Right ventricle myocardium inferior (tissue), 1 donor: ENCODE measurements at regions of chr2 and their contacts with region 1.

Region 1: GRCh38 chr2:231642631-231643494 is 50.2 kb downstream of the TEX44 start:
- DNase-seq: peak; percentile 84
- ATAC-seq: peak; percentile 93

Region 2: GRCh38 chr2:231662028-231662810 is 19.4 kb after region 1 on chr2:
- intact Hi-C with region 1: loop called (anchors 1 kb)
- DNase-seq: peak; percentile 97
- ATAC-seq: peak; percentile 80

Region 3: DNA sequence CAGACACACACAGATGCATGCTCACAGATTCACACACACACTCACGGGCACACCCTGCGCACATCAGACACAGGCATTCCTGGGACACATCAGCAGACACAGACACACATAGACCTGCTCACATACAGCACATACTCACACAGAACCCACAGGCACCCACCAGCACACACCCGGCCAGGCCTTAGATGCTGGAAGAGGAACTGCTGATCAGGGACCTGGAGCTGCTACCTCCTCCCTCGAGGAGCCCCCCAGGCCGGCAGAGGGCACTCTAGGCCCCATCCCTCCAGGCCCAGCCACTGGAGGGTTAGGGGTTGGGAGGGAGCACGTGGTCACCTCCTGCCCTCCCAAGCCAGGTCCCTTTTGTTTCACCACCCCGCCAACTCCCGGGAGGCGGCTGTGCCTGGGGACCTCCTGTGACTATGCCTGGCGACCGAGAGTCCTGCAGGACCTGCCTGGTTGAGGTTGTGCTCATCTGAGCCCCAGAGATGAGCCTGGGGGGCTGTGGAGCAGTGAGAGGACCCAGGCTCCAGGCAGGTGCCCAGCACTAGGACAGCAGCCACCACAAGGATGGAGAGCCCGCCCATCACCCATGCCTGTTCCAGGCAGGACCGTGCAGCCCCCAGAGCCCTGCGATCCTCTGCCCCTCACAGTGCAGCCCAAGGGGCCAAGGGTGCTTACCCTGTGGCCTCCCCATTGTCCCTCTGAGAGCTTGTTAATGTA is 44.4 kb after region 1 on chr2:
- intact Hi-C with region 1: no loop called
- DNase-seq: no peak
- ATAC-seq: peak; percentile 61